ENCODE measurements at regions of chr19 and their contacts with region 1.

Region 1: DNA sequence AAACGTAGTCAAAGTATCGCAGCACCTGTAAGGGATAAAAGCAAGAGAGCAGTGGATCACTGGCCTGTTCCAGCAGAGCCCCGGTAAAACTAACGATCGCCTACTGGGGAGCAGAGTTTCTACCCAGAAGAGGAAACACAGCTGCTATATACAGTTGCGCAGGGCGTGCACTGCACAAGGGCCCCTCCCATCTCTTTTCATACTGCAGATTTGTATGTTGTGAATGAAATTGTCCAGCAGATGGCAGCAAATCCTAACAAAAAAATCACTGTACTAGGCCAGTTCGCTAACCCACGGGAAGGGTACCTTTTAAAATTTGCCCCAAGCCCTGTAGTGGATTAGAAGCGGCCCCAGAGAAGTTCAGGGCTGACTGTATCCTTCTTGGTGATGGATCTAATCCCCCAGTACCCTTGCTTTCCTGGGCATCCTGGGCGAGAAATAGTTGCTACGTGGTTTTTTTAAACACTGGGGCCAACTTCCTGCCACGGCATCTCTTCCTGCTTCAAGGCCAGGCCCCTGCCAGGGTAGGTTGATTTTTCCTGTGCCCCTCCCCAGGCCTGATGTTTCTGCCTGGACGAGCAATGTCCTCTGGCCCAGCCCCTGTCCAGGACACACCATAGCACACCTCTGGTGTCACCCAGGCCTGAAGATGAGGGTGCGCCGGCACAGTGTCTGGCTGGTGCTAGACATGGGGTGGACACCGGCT is 127.0 kb downstream of the IER2 start:
- DNase-seq: no peak
- ATAC-seq: peak; percentile 85 to 98 (median 92)
- H3K4me3 ChIP-seq: no peak overlapping the region
- H3K27ac ChIP-seq: no peak overlapping the region
- H3K4me1 ChIP-seq: no peaks in the 10 kb centered on the region
- H3K27me3 ChIP-seq: no peaks in the 10 kb centered on the region
- CTCF ChIP-seq: peak; percentile 64 to 86 (median 68)
- POLR2A ChIP-seq: no peak

Region 2: GRCh38 chr19:13318190-13318589 is 40.9 kb after region 1 on chr19:
- intact Hi-C with region 1: no loop called
- DNase-seq: no peak
- ATAC-seq: no peak
- H3K4me3 ChIP-seq: no peak overlapping the region
- H3K27ac ChIP-seq: no peak overlapping the region
- H3K4me1 ChIP-seq: no peaks in the 10 kb centered on the region
- H3K27me3 ChIP-seq: no peaks in the 10 kb centered on the region
- CTCF ChIP-seq: no peak
- POLR2A ChIP-seq: no peak

Region 3: GRCh38 chr19:13430790-13431582 is 153.7 kb after region 1 on chr19:
- intact Hi-C with region 1: loop called in 1 of 2 experiments (anchors 10 kb)
- DNase-seq: peak; percentile 39 to 58 (median 53)
- ATAC-seq: peak; percentile 64 to 76 (median 71)
- H3K4me3 ChIP-seq: no peak overlapping the region
- H3K27ac ChIP-seq: no peak overlapping the region
- H3K4me1 ChIP-seq: no peaks in the 10 kb centered on the region
- H3K27me3 ChIP-seq: no peaks in the 10 kb centered on the region
- CTCF ChIP-seq: peak; percentile 46 to 63 (median 54)
- POLR2A ChIP-seq: no peak

Region 4: DNA sequence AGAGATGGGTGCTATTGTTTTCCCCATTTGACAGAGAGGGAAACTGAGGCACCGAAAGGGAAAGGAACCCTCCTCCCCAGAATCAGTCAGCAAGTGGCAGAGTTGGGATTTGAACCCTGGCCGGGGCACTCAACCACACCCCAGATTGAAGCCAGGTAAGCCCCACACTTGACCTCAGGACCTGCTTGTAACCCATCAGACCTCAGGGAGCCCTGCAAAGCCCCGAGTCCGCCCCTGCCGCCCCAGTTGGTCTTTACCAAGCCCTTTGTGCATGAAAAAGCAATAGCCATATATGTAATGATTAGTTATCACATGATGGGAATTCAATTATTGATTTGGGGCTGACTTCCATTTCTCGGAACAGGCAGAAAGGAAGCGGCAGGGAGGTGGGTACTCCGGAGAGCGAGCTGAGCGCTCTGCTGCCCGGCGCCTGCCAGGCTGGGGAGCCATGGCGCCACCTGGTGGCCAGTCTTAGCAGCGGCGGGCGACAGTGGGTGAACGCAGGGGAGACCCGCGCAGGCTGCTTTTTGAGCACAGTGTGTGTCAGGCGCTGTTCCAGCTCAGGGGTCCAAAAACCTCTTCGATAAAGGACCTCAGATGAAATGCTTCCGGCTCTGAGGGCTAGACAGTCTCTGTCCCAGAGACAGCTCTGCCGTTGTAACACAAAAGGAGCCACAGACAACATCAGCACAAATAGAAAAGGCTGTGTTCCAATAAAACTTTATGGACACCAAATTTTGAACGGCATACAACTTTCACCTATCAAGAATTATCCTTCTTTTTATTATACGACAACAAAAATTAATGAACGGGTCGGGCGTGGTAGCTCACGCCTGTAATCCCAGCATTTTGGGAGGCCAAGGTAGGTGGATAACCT is 311.9 kb after region 1 on chr19:
- intact Hi-C with region 1: loop called (anchors 5 to 10 kb)
- DNase-seq: peak; percentile 59 to 74 (median 69)
- ATAC-seq: peak; percentile 85 to 89 (median 86)
- H3K4me3 ChIP-seq: no peak overlapping the region
- H3K27ac ChIP-seq: no peak overlapping the region
- H3K4me1 ChIP-seq: no peaks in the 10 kb centered on the region
- H3K27me3 ChIP-seq: no peaks in the 10 kb centered on the region
- CTCF ChIP-seq: peak; percentile 78 to 99 (median 96)
- POLR2A ChIP-seq: no peak

Measured in right lobe of liver (tissue), 6 donors.